HepG2 (cell line): ENCODE measurements at regions of chr2 and their contacts with region 1.

Region 1: DNA sequence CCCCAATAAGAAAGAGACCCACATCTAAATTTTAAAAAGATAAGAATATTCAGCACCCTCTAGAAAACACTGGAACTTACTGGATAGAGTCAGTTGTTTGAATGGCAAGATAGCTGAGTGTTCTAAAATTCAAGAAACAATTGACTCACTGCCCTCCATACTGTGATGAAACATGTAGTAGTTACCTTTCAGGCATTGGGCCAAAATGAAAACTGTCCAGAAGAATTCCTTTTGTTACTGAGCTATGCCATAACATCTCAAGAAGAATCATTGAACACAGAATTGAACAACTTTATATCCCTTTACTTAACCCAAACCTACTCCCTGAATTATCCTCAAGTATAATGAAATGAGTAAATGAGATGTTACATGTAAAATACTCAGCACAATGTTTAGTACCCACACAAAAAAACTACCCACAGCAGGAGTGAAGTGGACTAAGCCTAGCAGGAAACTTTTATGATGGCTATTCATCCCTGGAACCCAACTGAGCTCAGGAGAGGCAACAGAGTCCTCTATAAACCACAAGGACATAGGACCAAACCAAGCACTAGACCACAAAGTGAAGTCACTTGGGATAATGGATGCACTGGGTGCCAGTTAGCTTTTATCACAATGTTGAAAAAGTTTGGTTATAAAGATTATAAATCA is 32.7 kb downstream of the RBM43 start:
- DNase-seq: no peak
- ATAC-seq: no peak
- H3K4me3 ChIP-seq: no peak overlapping the region
- H3K27ac ChIP-seq: no peak overlapping the region
- H3K4me1 ChIP-seq: no peaks in the 10 kb centered on the region
- H3K27me3 ChIP-seq: no peaks in the 10 kb centered on the region
- CTCF ChIP-seq: no peak
- EP300 ChIP-seq: no peak
- POLR2A ChIP-seq: no peak
- RAD21 ChIP-seq: no peak

Region 2: DNA sequence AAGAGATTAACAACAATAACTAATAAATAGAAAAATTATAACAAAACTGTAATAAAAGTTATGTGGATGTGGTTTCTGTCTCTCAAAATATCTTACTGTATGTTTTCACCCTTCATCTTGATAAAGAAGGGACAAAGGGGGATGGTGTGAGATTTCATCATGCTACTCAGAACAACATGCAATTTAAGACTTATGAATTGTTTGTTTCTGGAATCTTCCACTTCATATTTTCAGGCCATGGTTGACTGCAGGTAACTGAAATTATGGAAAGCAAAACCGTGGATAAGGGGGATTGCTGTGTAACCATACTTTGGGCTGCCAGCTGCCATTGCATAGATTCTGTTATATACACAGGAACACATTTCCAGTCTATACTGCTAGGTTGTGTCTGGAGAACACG is 459.7 kb after region 1 on chr2:
- CTCF ChIA-PET with region 1: no interaction called
- POLR2A ChIA-PET with region 1: no interaction called
- in situ Hi-C with region 1: no loop called
- intact Hi-C with region 1: loop called (anchors 5 kb)
- DNase-seq: no peak
- ATAC-seq: no peak
- H3K4me3 ChIP-seq: no peak overlapping the region
- H3K27ac ChIP-seq: no peak overlapping the region
- H3K4me1 ChIP-seq: no peaks in the 10 kb centered on the region
- H3K27me3 ChIP-seq: 0 out of 5 replicates have a peak, but pooled peaks cover 0 to 10% of the 10 kb centered on the region in 2 experiments
- CTCF ChIP-seq: no peak
- EP300 ChIP-seq: no peak
- POLR2A ChIP-seq: no peak
- RAD21 ChIP-seq: no peak